ENCODE measurements at regions of chr11 and their contacts with region 1.

Region 1: GRCh38 chr11:13008625-13009475 is at the start of gene RASSF10:
- DNase-seq: no peak
- ATAC-seq: no peak
- H3K4me3 ChIP-seq: no peak within 1 kb of the TSS
- H3K27ac ChIP-seq: no peak within 1 kb of the TSS
- H3K4me1 ChIP-seq: no peaks in the 10 kb centered on the region
- H3K27me3 ChIP-seq: peaks cover 6% of the 10 kb centered on the region; the same call in 1 of the 2 replicates
- CTCF ChIP-seq: no peak
- total RNA-seq, gene RASSF10: not detected

Region 2: DNA sequence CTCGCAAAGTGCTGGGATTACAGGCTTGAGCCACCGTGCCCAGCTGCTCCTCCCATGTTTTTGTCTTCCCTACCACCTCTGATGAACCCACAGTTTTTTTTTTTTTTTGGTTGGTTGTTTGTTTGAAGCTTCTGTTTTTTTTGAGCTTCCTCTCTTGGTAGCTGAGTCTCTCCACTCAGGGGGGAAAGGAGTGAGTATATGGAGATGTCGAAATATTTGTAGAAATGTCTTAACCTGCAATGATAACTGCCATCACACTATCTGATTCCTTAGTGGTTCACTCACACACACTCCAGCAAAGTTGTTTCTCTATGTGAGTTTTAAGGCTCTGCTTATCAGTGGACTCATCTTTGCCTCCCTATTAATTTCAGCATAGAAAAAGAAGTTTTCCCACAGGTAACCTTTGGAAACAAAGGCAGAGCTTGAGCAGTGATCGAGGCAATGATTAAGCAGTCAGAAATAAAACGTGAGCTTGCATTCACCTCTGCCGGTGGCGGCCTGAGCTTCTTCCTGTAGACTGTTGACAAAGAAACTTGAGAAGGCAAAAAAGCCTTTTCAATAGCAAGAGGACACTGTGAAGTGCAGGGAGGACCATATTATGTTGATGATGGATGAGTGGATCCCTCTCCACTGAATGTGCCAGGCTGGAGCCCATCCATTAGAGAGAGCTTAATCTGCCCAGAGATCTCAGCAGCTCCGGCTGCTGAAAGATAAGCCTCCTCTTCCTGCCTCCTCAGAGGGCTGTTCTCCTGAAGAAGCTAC is 28.7 kb before region 1 on chr11:
- CTCF ChIA-PET with region 1: no interaction called
- POLR2A ChIA-PET with region 1: interaction called, 14 read pairs
- in situ Hi-C with region 1: no loop called
- intact Hi-C with region 1: no loop called
- DNase-seq: no peak
- ATAC-seq: no peak
- H3K4me3 ChIP-seq: no peak overlapping the region
- H3K27ac ChIP-seq: no peak overlapping the region
- H3K4me1 ChIP-seq: no peaks in the 10 kb centered on the region
- H3K27me3 ChIP-seq: peaks cover 14% of the 10 kb centered on the region
- CTCF ChIP-seq: no peak